Pancreas (tissue), 10 donors: ENCODE measurements at regions of chr6 and their contacts with region 1.

Region 1: GRCh38 chr6:146857180-146857979 is 258.6 kb downstream of the ADGB start:
- DNase-seq: peak; percentile 69 to 93 (median 83)
- ATAC-seq: peak; percentile 95 to 99 (median 97)
- H3K4me3 ChIP-seq: peak overlapping the region in 1 of 4 donors; percentile 9
- H3K27ac ChIP-seq: peak overlapping the region in 3 of 4 donors; percentile 11 to 42 (median 33)
- H3K4me1 ChIP-seq: no peaks in the 10 kb centered on the region
- H3K27me3 ChIP-seq: no peaks in the 10 kb centered on the region
- CTCF ChIP-seq: peak; percentile 95 to 98 (median 97)

Region 2: GRCh38 chr6:147285087-147285855 is 427.9 kb after region 1 on chr6:
- intact Hi-C with region 1: loop called in 2 of 3 experiments (anchors 5 to 10 kb)
- DNase-seq: no peak
- ATAC-seq: peak in 3 of 4 donors; percentile 75 to 78 (median 77)
- H3K4me3 ChIP-seq: no peak overlapping the region
- H3K27ac ChIP-seq: no peak overlapping the region
- H3K4me1 ChIP-seq: peaks cover 11 to 28% (median 18%) of the 10 kb centered on the region in 3 donors
- H3K27me3 ChIP-seq: no peaks in the 10 kb centered on the region
- CTCF ChIP-seq: peak in 3 of 4 donors; percentile 28 to 35 (median 32)

Region 3: DNA sequence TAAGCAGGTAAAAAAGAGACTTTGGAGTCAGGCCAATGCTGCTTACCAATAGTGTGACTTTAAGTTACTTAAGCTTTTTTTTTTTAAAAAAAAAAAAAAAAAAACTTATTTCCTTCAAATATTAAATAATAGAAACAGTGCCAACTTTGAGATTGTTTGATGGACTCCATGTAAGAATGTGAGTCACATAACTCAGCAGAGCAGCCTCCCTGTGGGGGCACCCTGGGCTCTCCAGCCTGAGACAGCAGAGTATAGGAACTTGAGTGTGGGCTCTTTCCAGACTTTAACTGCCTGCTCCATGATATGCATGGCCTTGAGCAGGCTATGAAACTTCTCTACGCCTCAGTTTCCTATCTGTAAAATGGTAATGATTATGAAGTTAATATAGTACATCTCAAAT is 537.8 kb after region 1 on chr6:
- intact Hi-C with region 1: no loop called
- DNase-seq: no peak
- ATAC-seq: peak in 1 of 4 donors; percentile 45
- H3K4me3 ChIP-seq: no peak overlapping the region
- H3K27ac ChIP-seq: no peak overlapping the region
- H3K4me1 ChIP-seq: no peaks in the 10 kb centered on the region
- H3K27me3 ChIP-seq: no peaks in the 10 kb centered on the region
- CTCF ChIP-seq: no peak